ENCODE measurements at regions of chr13 and their contacts with region 1.

Region 1: DNA sequence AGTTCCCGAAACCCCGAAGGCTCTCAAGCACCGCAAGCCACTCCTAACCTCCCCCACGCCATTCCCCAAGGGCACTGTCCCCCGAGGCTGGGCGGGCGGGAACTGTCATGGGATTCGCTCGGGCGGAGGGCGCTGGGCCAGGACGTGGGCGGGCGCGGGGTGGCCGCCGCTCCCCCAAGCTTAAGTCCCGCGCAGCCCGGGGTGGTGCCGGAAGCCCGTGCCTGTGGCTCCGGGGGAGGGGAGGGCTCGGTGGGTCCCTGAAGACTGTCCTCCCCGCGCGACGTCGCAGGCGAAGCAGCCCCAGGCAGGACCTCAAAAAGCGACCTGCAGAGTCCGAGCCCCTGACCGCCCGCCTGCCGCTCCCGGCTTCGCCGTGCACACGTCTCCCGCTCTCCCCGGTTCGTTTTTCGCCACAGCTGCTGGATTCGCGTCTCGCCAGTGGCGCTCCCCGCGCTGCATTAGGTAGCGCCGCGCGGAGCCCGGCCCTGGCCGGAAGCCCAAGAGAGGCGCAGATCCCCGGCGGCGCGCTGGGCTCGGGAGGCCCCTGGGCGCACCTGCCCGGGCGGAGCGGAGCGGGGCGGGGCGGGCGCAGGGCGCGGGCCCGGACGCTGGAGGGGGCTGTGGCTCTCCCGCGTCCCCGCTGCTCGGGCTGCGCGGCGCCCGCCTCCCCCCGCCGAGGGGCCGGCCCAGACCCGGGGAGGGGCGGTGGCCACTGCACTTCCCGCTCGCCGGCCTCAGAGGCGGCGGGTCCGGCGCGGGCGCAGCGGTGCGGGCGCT is at the start of gene FARP1:
- DNase-seq: peak; percentile 88 to 96
- H3K4me3 ChIP-seq: peak within 1 kb of the TSS; percentile 86
- H3K4me3 Mint-ChIP-seq: peak within 1 kb of the TSS; percentile 95
- H3K27ac Mint-ChIP-seq: peak within 1 kb of the TSS; percentile 91
- H3K4me1 ChIP-seq: peaks cover 42% of the 10 kb centered on the region
- H3K4me1 Mint-ChIP-seq: peaks cover 12% of the 10 kb centered on the region
- H3K27me3 ChIP-seq: no peaks in the 10 kb centered on the region
- H3K27me3 Mint-ChIP-seq: no peaks in the 10 kb centered on the region
- CTCF ChIP-seq: no peak
- total RNA-seq, gene FARP1: 189 and 208 TPM in 2 replicates

Region 2: DNA sequence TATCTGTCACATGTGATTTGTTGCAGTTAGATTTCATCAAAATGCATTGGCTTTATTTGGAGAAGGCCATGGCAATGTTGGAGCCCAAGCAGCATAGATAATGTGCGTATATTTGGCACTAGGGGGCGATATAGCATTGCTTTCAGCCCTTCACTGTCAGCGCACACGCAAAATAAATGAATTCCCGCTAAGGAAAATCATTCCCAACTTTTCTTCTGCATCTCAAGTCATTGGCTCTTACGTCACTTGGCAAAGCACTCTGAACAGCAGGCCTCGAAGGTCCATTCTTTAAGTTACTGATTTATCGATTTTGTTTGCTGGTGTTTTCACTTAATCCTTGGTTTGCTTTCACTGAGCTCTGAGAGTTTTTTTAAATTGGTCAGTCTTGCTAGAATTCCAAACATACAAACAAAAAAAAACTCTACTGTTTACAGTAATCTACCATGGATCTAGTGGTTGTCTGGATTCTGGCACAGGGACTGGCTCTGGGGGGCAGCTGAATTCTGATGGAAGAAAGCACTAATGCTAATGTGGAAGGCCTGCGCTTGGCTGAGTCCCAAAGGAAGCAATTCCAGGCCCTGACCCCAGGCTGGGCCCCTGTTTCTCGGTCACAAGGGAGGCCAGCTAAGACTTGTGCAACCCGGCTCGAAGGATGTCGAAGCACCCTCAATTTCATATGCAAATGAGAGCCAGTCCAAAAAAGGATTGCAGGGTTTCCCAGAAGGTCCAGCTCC is 286.8 kb before region 1 on chr13:
- CTCF ChIA-PET with region 1: no interaction called
- POLR2A ChIA-PET with region 1: no interaction called
- intact Hi-C with region 1: loop called (anchors 2 kb)
- DNase-seq: peak; percentile 50 to 66
- H3K4me3 ChIP-seq: no peak overlapping the region
- H3K4me3 Mint-ChIP-seq: no peak overlapping the region
- H3K27ac Mint-ChIP-seq: no peak overlapping the region
- H3K4me1 ChIP-seq: 0 out of 2 replicates have a peak, but pooled peaks cover 3% of the 10 kb centered on the region
- H3K4me1 Mint-ChIP-seq: no peaks in the 10 kb centered on the region
- H3K27me3 ChIP-seq: no peaks in the 10 kb centered on the region
- H3K27me3 Mint-ChIP-seq: peaks cover 3% of the 10 kb centered on the region
- CTCF ChIP-seq: peak; percentile 81 to 88

Region 3: GRCh38 chr13:98173431-98174152 is 31.0 kb after region 1 on chr13:
- CTCF ChIA-PET with region 1: no interaction called
- POLR2A ChIA-PET with region 1: no interaction called
- intact Hi-C with region 1: no loop called
- DNase-seq: peak in 1 of 2 experiments; percentile 38
- H3K4me3 ChIP-seq: no peak overlapping the region
- H3K4me3 Mint-ChIP-seq: peak overlapping the region; percentile 20
- H3K27ac Mint-ChIP-seq: peak overlapping the region; percentile 82
- H3K4me1 ChIP-seq: peaks cover 54% of the 10 kb centered on the region
- H3K4me1 Mint-ChIP-seq: peaks cover 30% of the 10 kb centered on the region
- H3K27me3 ChIP-seq: no peaks in the 10 kb centered on the region
- H3K27me3 Mint-ChIP-seq: no peaks in the 10 kb centered on the region
- CTCF ChIP-seq: no peak

Region 4: GRCh38 chr13:98273824-98274742 is 131.5 kb after region 1 on chr13:
- CTCF ChIA-PET with region 1: no interaction called
- POLR2A ChIA-PET with region 1: no interaction called
- intact Hi-C with region 1: loop called (anchors 1 kb)
- DNase-seq: no peak
- H3K4me3 ChIP-seq: no peak overlapping the region
- H3K4me3 Mint-ChIP-seq: peak overlapping the region; percentile 44
- H3K27ac Mint-ChIP-seq: peak overlapping the region; percentile 98
- H3K4me1 ChIP-seq: peaks cover 83% of the 10 kb centered on the region
- H3K4me1 Mint-ChIP-seq: peaks cover 70% of the 10 kb centered on the region
- H3K27me3 ChIP-seq: no peaks in the 10 kb centered on the region
- H3K27me3 Mint-ChIP-seq: no peaks in the 10 kb centered on the region
- CTCF ChIP-seq: no peak

Region 5: GRCh38 chr13:98349731-98350305 is 207.2 kb after region 1 on chr13:
- CTCF ChIA-PET with region 1: interaction called, 3 read pairs
- POLR2A ChIA-PET with region 1: no interaction called
- intact Hi-C with region 1: loop called (anchors 1 kb)
- DNase-seq: peak; percentile 59 to 65
- H3K4me3 ChIP-seq: no peak overlapping the region
- H3K4me3 Mint-ChIP-seq: no peak overlapping the region
- H3K27ac Mint-ChIP-seq: no peak overlapping the region
- H3K4me1 ChIP-seq: no peaks in the 10 kb centered on the region; the same call in 1 of the 2 replicates
- H3K4me1 Mint-ChIP-seq: no peaks in the 10 kb centered on the region
- H3K27me3 ChIP-seq: no peaks in the 10 kb centered on the region
- H3K27me3 Mint-ChIP-seq: no peaks in the 10 kb centered on the region
- CTCF ChIP-seq: peak in 1 of 2 experiments; percentile 40

Region 6: DNA sequence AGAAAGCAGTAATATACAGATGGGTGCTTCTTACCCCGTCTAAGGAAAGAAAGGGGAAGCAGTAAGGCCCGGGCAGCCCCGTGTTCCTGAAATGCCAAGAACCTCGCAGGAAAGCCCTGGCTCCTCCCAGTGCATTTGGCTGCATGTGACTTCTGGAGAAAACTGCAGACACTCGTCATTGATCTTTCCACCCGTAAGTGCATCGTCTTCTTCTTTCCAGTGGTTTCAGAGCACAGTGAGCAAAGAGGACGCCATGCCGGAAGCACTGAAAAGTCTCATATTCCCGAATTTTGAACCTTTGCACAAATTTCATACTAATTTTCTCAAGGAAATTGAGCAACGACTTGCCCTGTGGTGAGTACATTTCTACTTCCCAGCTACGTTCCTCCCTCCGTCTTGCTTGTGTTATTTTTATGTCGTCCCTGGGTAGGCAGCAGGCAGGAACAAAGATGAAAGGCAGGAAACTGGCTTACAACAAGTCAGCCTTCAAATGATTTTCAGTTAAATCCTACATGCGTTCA is 269.2 kb after region 1 on chr13:
- CTCF ChIA-PET with region 1: no interaction called
- POLR2A ChIA-PET with region 1: no interaction called
- intact Hi-C with region 1: loop called (anchors 1 kb)
- DNase-seq: peak in 1 of 2 experiments; percentile 16
- H3K4me3 ChIP-seq: no peak overlapping the region
- H3K4me3 Mint-ChIP-seq: no peak overlapping the region
- H3K27ac Mint-ChIP-seq: no peak overlapping the region
- H3K4me1 ChIP-seq: peaks cover 19% of the 10 kb centered on the region
- H3K4me1 Mint-ChIP-seq: peaks cover 14% of the 10 kb centered on the region
- H3K27me3 ChIP-seq: no peaks in the 10 kb centered on the region
- H3K27me3 Mint-ChIP-seq: no peaks in the 10 kb centered on the region
- CTCF ChIP-seq: no peak